ENCODE measurements at regions of chr10 and their contacts with region 1.

Region 1: GRCh38 chr10:28897617-28898464 is 220.5 kb downstream of the BAMBI start:
- DNase-seq: no peak
- ATAC-seq: peak; percentile 96

Region 2: DNA sequence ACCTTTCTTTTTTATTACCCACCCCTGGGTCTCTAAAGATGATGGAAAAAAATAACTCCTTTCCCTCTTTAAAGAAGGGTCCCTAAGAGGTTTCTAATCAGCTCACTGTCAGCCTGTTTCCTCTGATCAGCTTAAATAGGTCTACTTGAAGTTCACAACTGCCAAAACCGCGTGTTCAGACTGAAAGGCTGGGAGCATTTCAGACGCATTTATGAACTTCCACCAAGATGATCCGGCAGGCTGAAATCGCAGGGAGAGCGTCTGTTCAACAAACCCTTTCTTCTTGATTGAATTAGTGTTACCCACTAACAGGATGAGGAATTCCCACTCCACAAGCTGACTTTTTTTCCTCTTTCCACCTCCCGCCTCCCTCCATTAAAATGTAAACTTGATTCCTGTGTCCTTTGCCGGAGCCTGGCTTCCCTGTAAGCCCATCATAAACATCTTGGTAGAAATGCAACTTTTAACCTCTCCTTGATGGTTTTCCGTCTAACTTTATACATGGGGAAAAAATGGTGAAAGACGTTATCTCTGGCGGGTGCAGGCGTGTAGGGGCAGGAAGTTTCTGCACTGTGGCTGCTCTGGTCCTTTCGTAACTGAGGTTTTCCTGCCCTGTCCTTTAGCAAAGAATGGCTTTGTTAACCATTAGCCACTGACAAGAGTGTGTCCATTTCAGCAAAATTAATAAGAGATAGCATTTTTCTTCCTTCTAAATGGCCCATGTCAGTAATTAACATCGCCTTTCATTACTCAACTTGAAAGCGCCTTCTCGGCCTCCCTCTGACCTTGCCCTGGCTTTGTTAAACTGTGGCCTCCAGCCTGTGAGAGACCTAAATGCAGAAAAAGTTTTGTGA is 89.9 kb before region 1 on chr10:
- intact Hi-C with region 1: loop called (anchors 5 kb)
- DNase-seq: no peak
- ATAC-seq: peak; percentile 24

Region 3: DNA sequence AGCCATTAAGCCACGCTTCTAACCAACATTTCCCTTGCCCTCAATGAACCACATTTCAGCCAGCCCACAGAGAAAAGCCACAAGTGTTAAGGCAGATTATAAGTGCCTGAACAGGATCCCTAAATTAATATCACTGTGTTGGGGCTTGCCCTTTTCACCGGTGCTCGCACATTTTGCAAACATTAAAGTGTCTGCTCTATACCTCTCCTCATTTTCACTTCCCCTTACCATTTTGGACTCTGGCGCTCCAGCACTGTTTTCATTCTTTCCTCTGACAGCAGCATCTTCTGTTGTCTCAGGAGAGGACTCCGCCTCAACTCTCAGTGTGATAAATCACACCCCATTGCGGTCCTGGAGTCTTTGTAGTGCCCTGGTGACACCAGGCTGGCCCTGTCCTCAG is 53.6 kb after region 1 on chr10:
- intact Hi-C with region 1: no loop called
- DNase-seq: no peak
- ATAC-seq: no peak

Region 4: DNA sequence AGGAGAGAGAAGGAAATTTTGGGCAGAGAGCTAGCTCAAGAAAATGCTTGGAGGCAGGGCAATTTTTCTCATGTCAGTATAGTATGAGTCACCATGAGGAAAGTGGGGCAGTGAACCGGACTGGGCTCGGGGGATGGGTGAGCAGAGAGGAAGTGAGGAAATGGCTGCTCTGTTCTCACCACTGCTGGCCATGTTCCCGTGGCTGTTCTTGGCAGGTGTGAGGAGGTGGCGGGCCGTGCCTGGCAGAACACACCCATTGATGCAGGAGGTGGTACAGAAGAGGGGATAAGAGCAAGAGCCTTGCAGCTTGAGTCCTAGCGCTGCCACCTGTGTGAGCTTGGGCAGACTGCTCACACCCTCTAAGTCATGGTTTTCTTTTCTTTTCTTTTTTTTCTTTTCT is 86.6 kb after region 1 on chr10:
- intact Hi-C with region 1: loop called (anchors 2 kb)
- DNase-seq: peak; percentile 91
- ATAC-seq: peak; percentile 98

Measured in Right ventricle myocardium inferior (tissue), 1 donor.